ENCODE measurements at regions of chr7 and their contacts with region 1.

Region 1: GRCh38 chr7:836411-837400 is 4.4 kb downstream of the SUN1 start:
- DNase-seq: no peak
- ATAC-seq: peak; percentile 14
- H3K4me3 ChIP-seq: peak overlapping the region; percentile 10; the same call in 1 of the 2 replicates
- H3K27ac ChIP-seq: peak overlapping the region; percentile 86
- H3K4me1 ChIP-seq: peaks cover 39% of the 10 kb centered on the region
- H3K27me3 ChIP-seq: no peaks in the 10 kb centered on the region
- CTCF ChIP-seq: peak; percentile 68

Region 2: DNA sequence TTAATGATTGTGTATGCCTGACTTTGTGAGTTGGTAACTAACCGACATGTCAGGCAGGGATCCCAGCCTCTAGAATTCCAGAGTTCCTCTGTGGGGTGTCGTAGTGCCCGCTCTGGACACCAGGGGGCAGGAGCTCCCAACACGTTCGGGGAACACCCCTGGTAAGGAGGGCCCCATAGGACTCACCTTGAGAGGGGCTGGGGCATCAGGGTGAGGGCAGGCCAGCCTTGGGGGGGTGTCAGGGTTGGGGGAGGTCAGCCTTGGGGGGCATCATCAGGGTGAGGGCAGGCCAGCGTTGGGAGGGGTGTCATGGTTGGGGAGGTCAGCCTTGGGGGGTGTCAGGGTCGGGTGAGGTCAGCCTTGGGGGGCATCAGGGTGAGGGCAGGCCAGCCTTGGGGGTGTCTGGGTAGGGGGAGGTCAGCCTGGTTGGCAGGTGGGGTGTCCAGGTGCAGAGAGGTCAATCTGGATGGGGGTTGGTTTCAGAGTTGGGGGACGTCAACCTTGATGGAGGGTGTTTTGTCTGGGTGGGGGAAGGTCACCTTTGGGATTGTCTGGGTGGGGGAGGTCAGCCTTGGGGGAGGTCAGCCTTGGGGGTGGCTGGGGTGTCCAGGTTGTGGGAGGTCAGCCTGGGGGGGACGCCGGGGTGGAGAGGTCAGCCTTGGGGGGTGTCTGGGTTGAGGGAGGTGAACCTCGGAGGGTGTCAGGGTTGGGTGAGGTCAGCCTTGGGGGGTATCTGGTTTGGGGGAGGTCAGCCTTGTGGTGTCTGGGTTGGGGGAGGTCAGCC is 50.0 kb before region 1 on chr7:
- CTCF ChIA-PET with region 1: no interaction called
- POLR2A ChIA-PET with region 1: interaction called, 4 read pairs
- intact Hi-C with region 1: loop called (anchors 1 kb)
- DNase-seq: peak; percentile 71
- ATAC-seq: peak; percentile 85
- H3K4me3 ChIP-seq: no peak overlapping the region
- H3K27ac ChIP-seq: no peak overlapping the region
- H3K4me1 ChIP-seq: no peaks in the 10 kb centered on the region
- H3K27me3 ChIP-seq: no peaks in the 10 kb centered on the region
- CTCF ChIP-seq: peak; percentile 88

Region 3: DNA sequence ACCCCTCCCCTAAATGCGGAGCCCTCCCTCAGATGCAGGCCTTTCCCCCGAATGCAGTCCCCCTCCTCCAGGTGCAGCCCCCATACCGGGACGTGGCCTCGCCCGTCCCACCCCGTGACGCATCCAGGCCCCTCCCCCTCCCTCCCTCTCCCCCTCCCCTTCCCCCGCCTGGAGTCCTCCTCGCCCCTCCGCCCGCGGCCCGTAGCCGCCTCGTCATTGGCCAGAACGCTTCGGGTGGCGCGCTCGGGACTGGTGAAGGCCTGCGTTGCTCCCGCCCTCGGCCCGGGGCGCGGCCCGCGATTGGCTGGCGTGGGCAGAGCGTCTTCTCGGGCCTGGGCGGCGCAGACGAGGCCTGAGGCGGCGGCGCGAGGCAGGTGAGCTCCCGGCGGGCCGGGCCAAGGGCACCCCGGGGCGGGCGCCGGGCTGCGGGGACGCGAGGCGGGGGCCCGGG is 20.4 kb before region 1 on chr7:
- CTCF ChIA-PET with region 1: interaction called, 15 read pairs
- POLR2A ChIA-PET with region 1: interaction called, 25 read pairs
- intact Hi-C with region 1: loop called (anchors 1 kb)
- DNase-seq: peak; percentile 98
- ATAC-seq: peak; percentile 87
- H3K4me3 ChIP-seq: peak overlapping the region; percentile 84
- H3K27ac ChIP-seq: no peak overlapping the region
- H3K4me1 ChIP-seq: peaks cover 40% of the 10 kb centered on the region
- H3K27me3 ChIP-seq: no peaks in the 10 kb centered on the region
- CTCF ChIP-seq: no peak